ENCODE measurements at regions of chr6 and their contacts with region 1.

Region 1: DNA sequence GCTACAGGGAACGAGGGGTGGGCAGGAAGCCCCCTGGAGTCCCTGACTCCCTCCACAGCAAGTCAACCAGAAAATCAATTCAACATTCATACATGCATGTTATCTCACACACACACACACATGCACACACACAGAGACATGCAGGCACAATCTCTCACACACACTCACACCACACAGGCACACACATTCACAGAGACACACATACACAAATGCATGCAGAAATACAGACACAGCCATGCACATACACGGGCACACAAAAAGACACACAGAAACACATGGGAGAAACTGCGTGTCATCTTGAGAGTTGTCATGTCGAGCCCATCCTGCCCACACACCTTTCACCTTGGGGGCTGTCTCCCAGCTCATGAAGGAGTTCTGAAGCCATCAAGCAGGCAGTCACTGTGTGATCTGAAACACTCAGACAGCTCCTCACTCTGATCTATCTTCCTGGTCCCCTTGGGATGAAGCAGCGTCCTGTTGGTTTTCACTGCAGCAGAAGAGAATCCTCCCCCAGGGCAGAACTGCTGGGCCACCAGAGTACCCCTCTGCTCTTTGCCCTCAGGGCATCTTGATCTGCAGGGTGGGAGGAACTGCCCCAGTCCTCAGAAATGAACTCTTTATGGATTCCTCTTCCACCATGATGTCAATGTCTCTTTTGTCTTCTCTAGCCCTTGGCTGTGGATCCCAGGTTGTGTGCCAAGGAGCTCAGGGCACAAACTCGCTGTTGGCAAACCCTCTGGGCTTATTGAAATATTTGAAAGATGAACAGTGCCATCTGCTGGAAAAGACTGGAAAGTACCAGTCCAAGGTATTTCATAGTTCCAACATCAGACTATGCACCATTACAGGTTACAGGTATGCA is 8.8 kb downstream of the RAET1L start:
- DNase-seq: peak in 1 of 2 experiments; percentile 60
- H3K4me3 ChIP-seq: no peak overlapping the region
- H3K4me3 Mint-ChIP-seq: no peak overlapping the region
- H3K27ac Mint-ChIP-seq: no peak overlapping the region
- H3K4me1 ChIP-seq: no peaks in the 10 kb centered on the region
- H3K4me1 Mint-ChIP-seq: no peaks in the 10 kb centered on the region
- H3K27me3 ChIP-seq: no peaks in the 10 kb centered on the region
- H3K27me3 Mint-ChIP-seq: peaks cover 34% of the 10 kb centered on the region
- CTCF ChIP-seq: peak; percentile 35 to 79

Region 2: GRCh38 chr6:149723771-149724417 is 292.7 kb before region 1 on chr6:
- CTCF ChIA-PET with region 1: no interaction called
- POLR2A ChIA-PET with region 1: no interaction called
- intact Hi-C with region 1: loop called (anchors 10 kb)
- DNase-seq: peak; percentile 55 to 62
- H3K4me3 ChIP-seq: no peak overlapping the region
- H3K4me3 Mint-ChIP-seq: no peak overlapping the region
- H3K27ac Mint-ChIP-seq: no peak overlapping the region
- H3K4me1 ChIP-seq: peaks cover 9% of the 10 kb centered on the region
- H3K4me1 Mint-ChIP-seq: peaks cover 14% of the 10 kb centered on the region
- H3K27me3 ChIP-seq: no peaks in the 10 kb centered on the region
- H3K27me3 Mint-ChIP-seq: no peaks in the 10 kb centered on the region
- CTCF ChIP-seq: peak; percentile 73 to 84

Region 3: DNA sequence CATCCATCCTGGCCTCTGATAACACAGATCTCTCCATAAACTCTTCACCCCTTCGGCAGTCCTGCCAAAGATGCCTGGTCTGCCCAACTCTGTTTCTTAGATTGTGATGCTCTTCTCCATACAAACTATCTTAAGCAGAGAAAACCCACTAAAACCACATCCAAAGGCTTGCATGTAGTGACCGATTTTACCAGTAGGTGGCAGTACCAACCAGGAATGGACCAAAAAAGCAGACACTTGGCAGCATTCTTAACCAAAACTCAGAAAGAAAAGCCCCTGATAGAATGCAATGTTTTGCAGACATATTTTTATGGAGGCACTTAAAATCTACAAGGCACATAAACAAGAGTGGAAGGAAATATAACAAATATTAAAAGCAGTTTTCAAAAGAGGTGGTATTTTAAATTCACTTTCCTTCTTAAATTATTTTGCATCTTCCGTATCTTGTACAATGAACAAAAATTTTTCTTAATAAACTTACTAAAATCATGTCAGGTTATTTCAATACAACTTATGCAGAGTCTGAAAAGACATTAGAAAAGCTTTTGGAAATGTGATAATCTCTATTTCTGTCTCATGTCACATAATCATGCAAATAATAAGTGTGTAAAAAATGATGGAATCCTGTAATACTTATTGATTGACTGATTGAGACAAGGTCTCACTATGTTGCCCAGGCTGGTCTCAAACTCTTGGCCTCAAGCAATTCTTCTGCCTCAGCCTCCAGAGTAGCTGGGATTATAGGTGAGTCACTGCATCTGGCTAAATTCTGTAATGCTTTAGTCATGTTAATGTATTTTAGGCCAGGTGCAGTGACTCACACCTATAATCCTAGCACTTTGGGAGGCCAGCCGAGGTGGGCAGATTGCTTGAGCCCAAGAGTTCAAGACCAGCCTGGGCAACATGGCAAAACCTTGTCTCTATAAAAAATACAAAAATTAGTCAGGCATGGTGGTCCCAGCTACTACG is 181.8 kb before region 1 on chr6:
- CTCF ChIA-PET with region 1: no interaction called
- POLR2A ChIA-PET with region 1: no interaction called
- intact Hi-C with region 1: loop called (anchors 2 kb)
- DNase-seq: peak; percentile 53 to 74
- H3K4me3 ChIP-seq: no peak overlapping the region
- H3K4me3 Mint-ChIP-seq: no peak overlapping the region
- H3K27ac Mint-ChIP-seq: no peak overlapping the region
- H3K4me1 ChIP-seq: no peaks in the 10 kb centered on the region
- H3K4me1 Mint-ChIP-seq: no peaks in the 10 kb centered on the region
- H3K27me3 ChIP-seq: no peaks in the 10 kb centered on the region
- H3K27me3 Mint-ChIP-seq: no peaks in the 10 kb centered on the region
- CTCF ChIP-seq: peak; percentile 76 to 86

Region 4: DNA sequence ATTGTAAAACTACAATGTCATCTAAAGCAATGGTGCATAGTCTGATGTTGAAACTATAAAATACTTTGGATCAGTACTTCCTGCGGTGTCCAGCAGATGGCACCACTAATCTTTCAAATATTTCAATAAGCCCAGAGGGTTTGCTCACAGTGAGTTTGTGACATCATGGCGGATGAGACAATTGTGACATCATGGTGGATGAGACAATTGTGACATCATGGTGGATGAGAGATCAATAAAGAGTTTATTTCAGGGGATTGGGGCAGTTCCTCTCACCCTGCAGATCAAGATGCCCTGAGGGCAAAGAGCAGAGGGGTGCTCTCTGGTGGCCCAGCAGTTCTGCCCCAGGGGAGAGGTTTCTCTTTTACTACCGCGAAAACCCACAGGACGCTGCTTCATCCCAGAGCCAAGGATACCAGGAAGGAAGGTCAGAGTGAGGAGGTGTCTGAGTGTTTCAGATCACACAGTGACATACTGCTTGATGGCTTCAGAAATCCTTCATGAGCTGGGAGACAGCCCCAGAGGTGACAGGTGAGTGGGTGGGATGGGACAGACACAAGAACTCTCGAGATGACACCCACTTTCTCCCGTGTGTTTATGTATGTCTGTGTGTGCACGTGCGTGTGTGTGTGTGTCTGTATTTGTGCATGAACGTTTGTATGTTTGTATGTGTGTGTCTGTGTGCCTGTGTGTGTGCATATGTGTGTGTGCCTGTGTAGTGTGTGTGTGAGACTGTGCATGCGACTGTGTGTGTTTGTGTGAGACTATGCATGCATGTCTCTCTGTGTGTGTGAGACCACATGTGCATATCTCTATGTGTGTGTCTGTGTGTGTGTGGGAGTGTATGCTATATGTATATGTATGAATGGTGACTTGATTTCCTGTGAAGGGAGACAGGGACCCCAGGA is 82.1 kb before region 1 on chr6:
- CTCF ChIA-PET with region 1: no interaction called
- POLR2A ChIA-PET with region 1: no interaction called
- intact Hi-C with region 1: loop called (anchors 1 kb)
- DNase-seq: peak; percentile 49 to 69
- H3K4me3 ChIP-seq: no peak overlapping the region
- H3K4me3 Mint-ChIP-seq: no peak overlapping the region
- H3K27ac Mint-ChIP-seq: no peak overlapping the region
- H3K4me1 ChIP-seq: no peaks in the 10 kb centered on the region
- H3K4me1 Mint-ChIP-seq: peaks cover 7% of the 10 kb centered on the region
- H3K27me3 ChIP-seq: no peaks in the 10 kb centered on the region; the same call in none of the 2 replicates
- H3K27me3 Mint-ChIP-seq: peaks cover 31% of the 10 kb centered on the region
- CTCF ChIP-seq: peak; percentile 60 to 74

Region 5: DNA sequence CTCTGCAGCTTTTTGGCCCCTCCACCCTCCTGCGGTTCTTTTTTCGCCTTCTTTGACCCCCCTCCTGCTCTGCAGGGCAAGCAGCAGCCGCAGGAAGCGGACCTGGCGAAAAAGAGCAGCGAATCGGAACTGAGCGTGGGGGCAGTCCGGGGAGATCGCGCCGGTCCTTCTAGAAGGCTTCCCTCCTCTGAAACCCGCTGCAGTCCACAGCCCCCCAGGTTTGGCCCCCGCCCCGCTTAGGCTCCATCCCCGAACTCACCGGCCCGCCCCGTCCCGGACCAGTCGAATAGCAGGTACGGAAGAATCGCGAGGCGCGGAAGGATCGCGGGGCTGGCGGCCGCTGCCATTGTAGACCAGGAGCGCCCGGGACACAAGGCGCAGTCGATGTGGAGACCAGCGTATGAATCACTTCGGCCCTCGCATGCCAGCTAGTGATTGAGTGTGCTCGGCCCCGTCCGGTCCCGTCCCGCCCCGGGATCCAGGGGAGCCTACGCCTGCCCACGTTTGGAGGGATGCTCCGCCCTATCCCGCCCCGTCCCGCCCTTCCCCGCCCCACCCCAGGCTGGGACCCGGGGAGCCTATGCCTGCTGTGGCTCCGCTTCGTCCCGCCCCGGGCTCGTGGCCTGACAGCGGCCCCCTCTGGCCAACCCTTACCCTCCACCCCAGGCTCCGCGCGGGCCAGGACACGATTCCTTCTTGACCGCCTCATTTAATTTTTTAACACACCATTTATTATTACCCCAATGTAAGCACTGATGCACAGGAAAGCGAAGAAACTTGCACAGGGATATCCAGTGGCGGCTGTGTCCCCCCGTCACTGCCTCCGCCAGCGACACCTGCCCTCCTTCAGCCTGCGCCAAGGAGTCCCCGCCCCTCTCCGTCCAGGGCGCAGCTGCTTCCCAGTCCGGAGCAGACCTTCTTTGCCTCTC is 52.4 kb after region 1 on chr6 and contains the start of gene ULBP3:
- CTCF ChIA-PET with region 1: interaction called, 5 read pairs
- POLR2A ChIA-PET with region 1: no interaction called
- intact Hi-C with region 1: loop called (anchors 5 kb)
- DNase-seq: peak; percentile 91 to 93
- H3K4me3 ChIP-seq: peak within 1 kb of the TSS; percentile 66
- H3K4me3 Mint-ChIP-seq: peak within 1 kb of the TSS; percentile 80
- H3K27ac Mint-ChIP-seq: peak within 1 kb of the TSS; percentile 44
- H3K4me1 ChIP-seq: no peaks in the 10 kb centered on the region; the same call in 1 of the 2 replicates
- H3K4me1 Mint-ChIP-seq: peaks cover 7% of the 10 kb centered on the region
- H3K27me3 ChIP-seq: no peaks in the 10 kb centered on the region
- H3K27me3 Mint-ChIP-seq: no peaks in the 10 kb centered on the region
- CTCF ChIP-seq: peak; percentile 48 to 86
- total RNA-seq, gene ULBP3: 8.1 and 8.5 TPM in 2 replicates